ENCODE measurements at regions of chr17 and their contacts with region 1.

Region 1: DNA sequence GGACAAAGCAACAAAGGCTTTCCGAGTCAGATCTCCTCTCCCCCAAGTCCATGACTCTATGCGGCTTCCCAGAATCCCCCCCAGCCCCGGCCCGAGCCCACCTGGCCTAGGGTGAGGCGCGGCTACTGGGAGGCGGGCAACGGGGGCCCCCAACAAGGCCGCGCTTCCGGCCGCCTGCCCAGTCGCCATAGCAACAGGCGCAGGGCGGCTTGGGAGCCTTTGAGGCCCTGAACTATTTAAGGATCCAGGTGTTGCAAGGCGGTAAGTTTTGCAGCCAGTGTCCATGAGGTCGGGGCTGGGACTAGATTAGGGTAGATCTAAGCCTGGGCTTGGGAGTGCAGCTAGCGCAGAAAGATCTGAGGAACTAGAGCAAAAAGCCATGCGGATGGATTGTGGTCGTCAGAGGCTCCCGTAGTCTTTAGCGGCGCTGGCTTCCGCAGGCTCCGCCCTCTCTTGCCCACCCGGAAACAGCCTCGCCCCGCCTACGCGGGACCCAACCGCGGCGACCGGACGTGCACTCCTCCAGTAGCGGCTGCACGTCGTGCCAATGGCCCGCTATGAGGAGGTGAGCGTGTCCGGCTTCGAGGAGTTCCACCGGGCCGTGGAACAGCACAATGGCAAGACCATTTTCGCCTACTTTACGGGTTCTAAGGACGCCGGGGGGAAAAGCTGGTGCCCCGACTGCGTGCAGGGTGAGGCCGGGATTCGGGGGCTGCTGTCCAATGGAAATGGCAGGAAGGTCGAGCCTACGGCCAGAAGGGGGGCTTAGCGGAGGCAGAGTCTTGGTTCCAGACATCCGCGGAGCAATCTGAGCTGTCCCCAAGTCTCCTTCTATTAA is at the starts of genes KIAA0753 and TXNDC17:
- DNase-seq: peak; percentile 85 to 91 (median 87)
- H3K4me3 ChIP-seq: peak within 1 kb of the TSS; percentile 74 to 94
- H3K4me3 Mint-ChIP-seq: peak within 1 kb of the TSS; percentile 95 to 98 (median 96)
- H3K27ac ChIP-seq: peak within 1 kb of the TSS; percentile 81
- H3K27ac Mint-ChIP-seq: peak within 1 kb of the TSS; percentile 96 to 99 (median 98)
- H3K4me1 ChIP-seq: peaks cover 40% of the 10 kb centered on the region
- H3K4me1 Mint-ChIP-seq: peaks cover 17 to 67% (median 43%) of the 10 kb centered on the region in 4 donors
- H3K27me3 ChIP-seq: no peaks in the 10 kb centered on the region
- H3K27me3 Mint-ChIP-seq: no peaks in the 10 kb centered on the region
- total RNA-seq, gene KIAA0753: 15.6 to 18.6 TPM
- total RNA-seq, gene TXNDC17: 17.0 to 27.1 TPM

Region 2: GRCh38 chr17:6473128-6473767 is 167.5 kb before region 1 on chr17:
- CTCF ChIA-PET with region 1: no interaction called
- POLR2A ChIA-PET with region 1: interaction called, 3 read pairs
- intact Hi-C with region 1: loop called (anchors 10 kb)
- DNase-seq: peak; percentile 49 to 58 (median 52)
- H3K4me3 ChIP-seq: no peak overlapping the region
- H3K4me3 Mint-ChIP-seq: no peak overlapping the region
- H3K27ac ChIP-seq: no peak overlapping the region
- H3K27ac Mint-ChIP-seq: peak overlapping the region in 3 of 7 donors; percentile 29 to 87 (median 57)
- H3K4me1 ChIP-seq: no peaks in the 10 kb centered on the region
- H3K4me1 Mint-ChIP-seq: peaks cover 0 to 4% (median under 1%) of the 10 kb centered on the region in 4 donors
- H3K27me3 ChIP-seq: no peaks in the 10 kb centered on the region
- H3K27me3 Mint-ChIP-seq: peaks cover 0 to 6% of the 10 kb centered on the region in 2 donors

Region 3: GRCh38 chr17:6651357-6651918 is 10.7 kb after region 1 on chr17 and contains the starts of genes C17orf100 and MED31:
- CTCF ChIA-PET with region 1: interaction called, 9 read pairs
- POLR2A ChIA-PET with region 1: interaction called, 78 read pairs
- intact Hi-C with region 1: loop called (anchors 1 kb)
- DNase-seq: peak; percentile 93 to 96 (median 95)
- H3K4me3 ChIP-seq: peak within 1 kb of the TSS; percentile 80 to 83
- H3K4me3 Mint-ChIP-seq: peak within 1 kb of the TSS; percentile 96 to 100 (median 99)
- H3K27ac ChIP-seq: peak within 1 kb of the TSS; percentile 99
- H3K27ac Mint-ChIP-seq: peak within 1 kb of the TSS; percentile 99 to 100 (median 100)
- H3K4me1 ChIP-seq: peaks cover 50% of the 10 kb centered on the region
- H3K4me1 Mint-ChIP-seq: peaks cover 36 to 82% (median 61%) of the 10 kb centered on the region in 4 donors
- H3K27me3 ChIP-seq: no peaks in the 10 kb centered on the region
- H3K27me3 Mint-ChIP-seq: no peaks in the 10 kb centered on the region
- total RNA-seq, gene C17orf100: 4.0 to 4.3 TPM
- total RNA-seq, gene MED31: 30.8 to 35.8 TPM

Region 4: GRCh38 chr17:6657633-6658287 is 17.0 kb after region 1 on chr17:
- CTCF ChIA-PET with region 1: interaction called, 3 read pairs
- POLR2A ChIA-PET with region 1: interaction called, 30 read pairs
- intact Hi-C with region 1: no loop called
- DNase-seq: no peak
- H3K4me3 ChIP-seq: peak overlapping the region; percentile 57 to 69
- H3K4me3 Mint-ChIP-seq: peak overlapping the region; percentile 80 to 96 (median 94)
- H3K27ac ChIP-seq: peak overlapping the region; percentile 67
- H3K27ac Mint-ChIP-seq: peak overlapping the region; percentile 86 to 96 (median 92)
- H3K4me1 ChIP-seq: peaks cover 28% of the 10 kb centered on the region
- H3K4me1 Mint-ChIP-seq: peaks cover 25 to 62% (median 48%) of the 10 kb centered on the region in 4 donors
- H3K27me3 ChIP-seq: no peaks in the 10 kb centered on the region
- H3K27me3 Mint-ChIP-seq: no peaks in the 10 kb centered on the region

Region 5: DNA sequence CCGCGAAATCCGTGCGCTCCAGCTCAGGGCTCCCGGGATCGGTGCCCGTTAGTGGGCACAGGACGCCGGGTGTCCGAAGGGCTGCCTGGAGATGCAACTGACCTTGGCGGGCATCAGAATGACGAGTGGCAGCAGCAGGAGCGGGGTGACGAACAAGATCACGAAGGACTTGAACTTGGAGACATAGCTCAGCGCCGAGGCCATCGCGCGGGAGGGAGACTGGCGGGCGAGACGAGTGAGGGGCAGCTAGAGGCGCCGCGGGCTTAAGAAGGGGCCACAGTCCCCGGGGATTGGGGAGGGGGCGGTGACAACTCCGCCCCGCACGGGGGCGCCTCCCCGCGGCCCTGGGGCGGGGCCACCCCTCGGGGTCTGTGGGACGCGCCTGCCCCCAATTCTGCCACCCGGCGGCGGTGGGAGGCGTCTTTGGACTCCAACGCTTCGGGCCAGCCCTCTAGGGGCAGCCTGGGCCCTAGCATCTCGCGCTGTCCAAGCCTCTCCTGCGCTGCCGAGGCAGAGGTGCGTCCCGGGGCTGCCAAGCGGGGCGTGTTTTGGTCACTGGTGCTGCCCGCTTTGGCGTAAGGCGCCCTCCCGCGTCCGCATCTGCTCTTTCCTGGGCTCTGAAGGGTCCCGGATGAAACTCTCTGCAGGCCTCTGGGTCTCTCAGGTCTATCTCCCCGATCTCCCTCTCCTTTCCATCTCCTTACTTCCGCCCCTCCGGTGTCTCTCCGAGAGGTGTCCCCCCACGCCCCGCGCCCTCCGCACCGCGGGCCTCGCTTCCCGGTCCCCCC is 72.6 kb after region 1 on chr17 and contains the start of gene SLC13A5:
- CTCF ChIA-PET with region 1: no interaction called
- POLR2A ChIA-PET with region 1: no interaction called
- intact Hi-C with region 1: no loop called
- DNase-seq: no peak
- H3K4me3 ChIP-seq: no peak within 1 kb of the TSS
- H3K4me3 Mint-ChIP-seq: peak within 1 kb of the TSS in 7 of 8 donors; percentile 21 to 73 (median 66)
- H3K27ac ChIP-seq: no peak within 1 kb of the TSS
- H3K27ac Mint-ChIP-seq: no peak within 1 kb of the TSS
- H3K4me1 ChIP-seq: peaks cover 8% of the 10 kb centered on the region
- H3K4me1 Mint-ChIP-seq: peaks cover 10 to 20% (median 15%) of the 10 kb centered on the region in 4 donors
- H3K27me3 ChIP-seq: peaks cover 4% of the 10 kb centered on the region
- H3K27me3 Mint-ChIP-seq: peaks cover 47 to 57% of the 10 kb centered on the region in 2 donors
- total RNA-seq, gene SLC13A5: not detected

Region 6: GRCh38 chr17:6753006-6753445 is 112.3 kb after region 1 on chr17:
- CTCF ChIA-PET with region 1: no interaction called
- POLR2A ChIA-PET with region 1: interaction called, 3 read pairs
- intact Hi-C with region 1: loop called (anchors 10 kb)
- DNase-seq: peak; percentile 42 to 70 (median 63)
- H3K4me3 ChIP-seq: no peak overlapping the region
- H3K4me3 Mint-ChIP-seq: peak overlapping the region; percentile 4 to 75 (median 62)
- H3K27ac ChIP-seq: no peak overlapping the region
- H3K27ac Mint-ChIP-seq: peak overlapping the region; percentile 82 to 95 (median 87)
- H3K4me1 ChIP-seq: peaks cover 42% of the 10 kb centered on the region
- H3K4me1 Mint-ChIP-seq: peaks cover 31 to 57% (median 47%) of the 10 kb centered on the region in 4 donors
- H3K27me3 ChIP-seq: no peaks in the 10 kb centered on the region
- H3K27me3 Mint-ChIP-seq: no peaks in the 10 kb centered on the region